ENCODE measurements at regions of chr7 and their contacts with region 1.

Region 1: DNA sequence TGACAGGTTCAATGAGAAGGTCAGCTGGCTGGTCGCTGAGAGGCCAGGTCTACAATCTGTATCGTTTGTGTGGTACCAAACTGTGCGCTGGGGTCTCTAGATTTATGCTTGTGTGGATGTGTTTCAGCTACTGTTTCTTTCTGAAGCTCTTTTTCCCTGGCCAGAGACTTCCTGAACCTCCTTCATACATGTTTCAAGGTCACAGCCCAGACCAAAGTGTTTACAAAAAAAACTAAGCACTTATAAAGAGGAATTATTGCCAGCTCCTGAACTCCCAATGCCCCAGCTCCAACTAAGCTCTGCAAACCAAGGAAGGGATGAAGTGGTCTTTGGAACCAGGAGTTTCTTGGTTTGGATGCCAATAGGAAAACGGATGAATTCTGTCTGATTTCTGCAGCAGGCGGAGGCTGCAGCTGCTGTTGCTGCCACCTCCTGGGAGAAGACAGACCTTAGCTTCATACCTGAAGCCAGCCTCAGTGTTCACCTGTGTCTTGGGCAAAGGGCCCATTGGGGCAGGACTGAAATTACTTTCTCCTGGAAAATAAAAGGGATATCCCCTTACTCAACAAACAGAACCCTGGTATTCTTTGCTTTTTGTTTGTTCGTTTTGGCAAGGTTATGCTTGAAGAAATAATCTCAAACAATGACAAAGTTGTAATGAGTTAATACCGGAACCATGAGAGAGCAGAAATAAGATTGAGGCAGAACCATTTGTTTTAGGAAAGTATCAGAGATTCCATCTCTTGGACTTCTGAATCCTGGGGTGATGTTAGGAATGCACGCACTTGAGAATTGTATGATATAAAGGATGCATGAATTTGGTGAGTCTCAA is 24.6 kb upstream of the MKLN1 start:
- DNase-seq: no peak
- ATAC-seq: peak; percentile 64

Region 2: DNA sequence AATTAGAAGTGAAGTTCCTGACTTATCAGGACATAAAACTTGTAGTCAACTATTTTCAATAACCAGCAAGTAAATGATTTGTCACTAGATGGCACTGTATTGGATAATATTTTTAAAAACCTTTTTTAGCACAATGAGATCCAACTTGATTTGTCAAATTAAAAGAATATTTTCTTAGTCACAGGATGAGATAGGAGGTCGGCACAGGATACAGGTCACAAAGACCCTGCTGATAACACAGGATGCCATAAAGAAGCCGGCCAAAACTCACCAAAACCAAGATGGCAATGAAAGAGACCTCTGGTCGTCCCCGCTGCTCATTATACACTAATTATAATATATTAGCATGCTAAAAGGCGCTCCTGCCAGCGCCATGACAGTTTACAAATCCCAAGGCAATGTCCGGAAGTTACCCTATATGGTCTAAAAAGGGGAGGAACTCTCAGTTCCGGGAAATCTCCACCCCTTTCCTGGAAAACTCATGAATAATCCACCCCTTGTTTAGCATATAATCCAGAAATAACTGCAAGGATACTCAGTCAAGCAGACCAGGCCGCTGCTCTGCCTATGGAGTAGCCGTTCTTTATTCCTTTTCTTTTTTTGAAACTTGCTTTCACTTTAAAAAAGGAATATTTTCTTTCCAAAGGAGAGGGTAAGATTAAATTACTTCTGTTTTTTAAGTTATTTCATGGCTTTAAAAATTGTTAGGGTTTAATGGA is 231.1 kb before region 1 on chr7:
- intact Hi-C with region 1: loop called (anchors 2 kb)
- DNase-seq: no peak
- ATAC-seq: peak; percentile 38

Region 3: DNA sequence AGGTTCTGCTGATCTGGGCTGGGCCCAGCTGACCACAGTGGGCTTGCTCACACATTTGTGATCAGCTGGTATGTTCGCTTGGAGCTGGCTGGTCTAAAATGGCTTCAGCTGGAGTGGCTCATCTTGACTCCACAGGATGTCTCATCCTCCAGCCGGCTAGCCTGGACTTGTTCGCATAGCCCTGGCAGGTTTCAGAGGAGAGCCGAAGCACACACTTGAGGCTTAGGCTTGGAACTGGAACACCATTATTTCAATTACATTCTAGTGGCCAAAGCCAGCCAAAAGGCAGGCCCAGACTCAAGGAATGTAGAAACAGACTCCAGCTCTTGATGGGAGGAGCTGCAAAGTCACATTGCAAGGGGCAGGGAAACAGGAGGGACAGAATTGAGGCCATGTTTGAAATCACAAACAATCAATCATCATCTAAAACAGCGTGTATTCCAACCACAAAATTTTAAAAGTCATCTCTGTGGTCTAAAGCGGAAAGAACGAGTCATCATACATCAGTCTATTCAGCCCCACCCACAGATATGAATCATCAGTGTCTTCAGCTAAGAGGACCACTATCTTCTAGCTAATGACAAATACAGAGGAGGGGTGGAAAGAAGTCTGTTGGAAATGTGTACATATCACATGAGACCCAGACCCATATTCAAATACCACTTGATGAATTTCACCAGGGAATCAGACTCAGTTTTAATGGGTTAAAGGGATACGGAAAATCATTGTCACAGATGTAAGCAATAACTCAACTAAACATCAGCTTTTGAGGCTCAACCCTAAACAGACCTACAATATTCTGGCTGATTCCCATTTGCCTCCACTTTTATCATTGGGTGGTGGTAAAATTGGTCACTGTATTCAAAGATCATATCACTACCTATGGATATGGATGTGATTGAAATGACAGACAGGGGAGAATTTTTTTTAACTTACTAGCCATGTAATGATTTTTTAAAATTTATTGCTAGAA is 114.4 kb before region 1 on chr7:
- intact Hi-C with region 1: loop called (anchors 5 kb)
- DNase-seq: no peak
- ATAC-seq: no peak

Region 4: GRCh38 chr7:131254211-131254610 is 48.9 kb before region 1 on chr7:
- intact Hi-C with region 1: no loop called
- DNase-seq: no peak
- ATAC-seq: no peak